CD4-positive, alpha-beta T cell (primary cell): ENCODE measurements at regions of chr14 and their contacts with region 1.

Region 1: DNA sequence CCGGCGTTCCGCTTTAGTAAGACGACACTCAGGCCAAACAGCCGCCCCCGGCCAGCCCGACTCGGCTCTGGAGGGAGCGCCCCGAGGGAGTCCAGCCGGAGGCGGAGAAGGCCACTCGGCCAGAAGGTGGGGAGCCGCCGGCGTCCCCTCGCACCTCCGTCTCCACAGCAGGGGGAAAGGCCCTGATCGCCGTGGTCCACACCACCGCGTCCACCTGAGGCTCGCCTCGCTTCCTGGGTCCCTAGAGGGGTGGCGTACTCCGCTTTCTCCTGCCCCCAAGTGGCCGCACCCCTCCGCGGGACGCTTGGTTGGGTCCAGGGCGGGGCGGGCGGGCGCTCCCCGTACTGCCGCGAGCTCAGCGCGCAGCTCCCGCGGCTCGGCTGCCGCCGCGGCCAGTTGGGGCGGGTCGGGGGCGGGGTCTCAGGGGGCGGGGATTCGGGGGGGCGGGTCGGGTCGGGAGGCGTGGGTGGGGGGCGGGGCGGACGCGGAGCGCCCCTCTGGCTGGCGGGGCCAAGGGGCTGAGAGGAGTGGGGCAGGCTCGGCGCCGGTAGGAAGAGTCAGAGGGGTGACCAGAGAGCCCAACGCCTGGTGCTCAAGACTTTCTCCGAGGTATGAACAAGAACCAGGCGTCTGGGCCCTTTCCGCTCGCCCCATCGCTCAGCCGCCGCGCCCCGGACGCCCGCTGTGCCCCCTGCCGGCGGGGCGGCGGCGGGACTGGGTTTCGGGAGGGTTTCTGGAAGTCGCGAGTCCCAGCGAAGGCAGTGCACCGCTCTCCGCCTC is at the start of gene FRMD6:
- DNase-seq: peak; percentile 61 to 91 (median 76)
- ATAC-seq: peak; percentile 80
- H3K4me3 ChIP-seq: peak within 1 kb of the TSS; percentile 72
- H3K4me3 Mint-ChIP-seq: peak within 1 kb of the TSS; percentile 86
- H3K27ac ChIP-seq: peak within 1 kb of the TSS in 1 of 2 donors; percentile 61
- H3K27ac Mint-ChIP-seq: peak within 1 kb of the TSS; percentile 84
- H3K4me1 ChIP-seq: peaks cover 15% of the 10 kb centered on the region
- H3K4me1 Mint-ChIP-seq: peaks cover 20% of the 10 kb centered on the region
- H3K27me3 ChIP-seq: peaks cover 5 to 18% of the 10 kb centered on the region in 2 experiments
- H3K27me3 Mint-ChIP-seq: peaks cover 17% of the 10 kb centered on the region
- CTCF ChIP-seq: peak; percentile 75
- total RNA-seq, gene FRMD6: 1.4 to 1.5 TPM

Region 2: GRCh38 chr14:50311975-50312733 is 1339.4 kb before region 1 on chr14 and contains the starts of genes DMAC2L and L2HGDH:
- CTCF ChIA-PET with region 1: no interaction called
- POLR2A ChIA-PET with region 1: no interaction called
- intact Hi-C with region 1: loop called in 1 of 2 experiments (anchors 5 kb)
- DNase-seq: peak; percentile 72 to 94 (median 84)
- ATAC-seq: peak; percentile 85
- H3K4me3 ChIP-seq: peak within 1 kb of the TSS; percentile 90
- H3K4me3 Mint-ChIP-seq: peak within 1 kb of the TSS; percentile 97
- H3K27ac ChIP-seq: peak within 1 kb of the TSS; percentile 85 to 90
- H3K27ac Mint-ChIP-seq: peak within 1 kb of the TSS; percentile 98
- H3K4me1 ChIP-seq: peaks cover 23% of the 10 kb centered on the region
- H3K4me1 Mint-ChIP-seq: peaks cover 57% of the 10 kb centered on the region
- H3K27me3 ChIP-seq: no peaks in the 10 kb centered on the region
- H3K27me3 Mint-ChIP-seq: no peaks in the 10 kb centered on the region
- CTCF ChIP-seq: no peak
- total RNA-seq, gene DMAC2L: 10.8 to 13.4 TPM
- total RNA-seq, gene L2HGDH: 1.7 to 3.1 TPM

Region 3: DNA sequence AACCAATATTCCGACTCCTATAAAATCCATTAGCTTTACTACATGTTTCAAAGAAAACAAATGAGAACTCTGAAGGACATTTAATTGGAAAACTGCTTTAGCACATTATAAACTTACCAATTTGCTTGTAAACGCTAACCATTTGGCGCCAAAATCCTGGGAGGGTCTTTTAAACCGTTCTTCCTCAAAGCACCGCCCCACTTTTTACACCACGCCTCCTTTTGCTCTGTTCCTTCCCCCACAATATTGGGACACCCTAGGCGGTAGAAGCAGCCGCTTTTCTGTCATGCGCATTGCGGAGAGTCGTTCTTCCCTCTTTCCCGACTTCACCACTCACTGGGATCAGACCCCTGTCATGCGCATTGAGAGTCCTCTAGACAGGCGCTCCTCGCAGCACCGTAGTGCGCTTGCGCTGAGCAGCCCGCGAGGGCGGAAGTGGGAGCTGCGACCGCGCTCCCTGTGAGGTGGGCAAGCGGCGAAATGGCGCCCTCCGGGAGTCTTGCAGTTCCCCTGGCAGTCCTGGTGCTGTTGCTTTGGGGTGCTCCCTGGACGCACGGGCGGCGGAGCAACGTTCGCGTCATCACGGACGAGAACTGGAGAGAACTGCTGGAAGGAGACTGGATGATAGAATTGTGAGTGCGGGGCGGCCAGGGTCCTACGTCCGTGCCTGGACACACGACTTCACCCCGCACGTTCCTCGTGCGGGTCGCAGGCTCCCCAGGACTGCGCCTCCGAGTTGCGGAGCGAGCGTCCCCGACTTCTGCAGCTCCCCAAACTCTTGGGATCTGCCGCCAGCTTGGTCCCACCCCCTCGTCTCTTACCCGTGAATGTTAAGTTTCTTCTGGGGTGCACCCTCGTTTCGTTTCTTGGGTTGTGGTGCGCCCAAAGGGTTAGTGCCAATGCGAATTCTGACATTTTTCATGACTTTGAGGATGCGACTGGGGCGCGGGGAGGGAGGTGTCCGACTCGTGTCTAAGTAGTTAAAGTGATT is 411.5 kb before region 1 on chr14 and contains the start of gene TMX1:
- CTCF ChIA-PET with region 1: no interaction called
- POLR2A ChIA-PET with region 1: no interaction called
- intact Hi-C with region 1: loop called in 1 of 2 experiments (anchors 5 kb)
- DNase-seq: peak; percentile 63 to 95 (median 80)
- ATAC-seq: peak; percentile 90
- H3K4me3 ChIP-seq: peak within 1 kb of the TSS; percentile 86
- H3K4me3 Mint-ChIP-seq: no peak within 1 kb of the TSS
- H3K27ac ChIP-seq: peak within 1 kb of the TSS; percentile 69 to 75
- H3K27ac Mint-ChIP-seq: no peak within 1 kb of the TSS
- H3K4me1 ChIP-seq: peaks cover 19% of the 10 kb centered on the region
- H3K4me1 Mint-ChIP-seq: peaks cover 42% of the 10 kb centered on the region
- H3K27me3 ChIP-seq: no peaks in the 10 kb centered on the region
- H3K27me3 Mint-ChIP-seq: no peaks in the 10 kb centered on the region
- CTCF ChIP-seq: no peak
- total RNA-seq, gene TMX1: 9.5 to 11.0 TPM

Region 4: GRCh38 chr14:51846631-51847488 is 195.3 kb after region 1 on chr14:
- CTCF ChIA-PET with region 1: interaction called, 5 read pairs
- POLR2A ChIA-PET with region 1: interaction called, 11 read pairs
- intact Hi-C with region 1: loop called (anchors 5 to 10 kb)
- DNase-seq: peak; percentile 66 to 98 (median 82)
- ATAC-seq: peak; percentile 83
- H3K4me3 ChIP-seq: peak overlapping the region; percentile 53
- H3K4me3 Mint-ChIP-seq: peak overlapping the region; percentile 86
- H3K27ac ChIP-seq: peak overlapping the region; percentile 99 to 100
- H3K27ac Mint-ChIP-seq: peak overlapping the region; percentile 98
- H3K4me1 ChIP-seq: peaks cover 44% of the 10 kb centered on the region
- H3K4me1 Mint-ChIP-seq: peaks cover 72% of the 10 kb centered on the region
- H3K27me3 ChIP-seq: no peaks in the 10 kb centered on the region
- H3K27me3 Mint-ChIP-seq: no peaks in the 10 kb centered on the region
- CTCF ChIP-seq: no peak

Region 5: GRCh38 chr14:51979088-51979709 is 327.6 kb after region 1 on chr14:
- CTCF ChIA-PET with region 1: interaction called, 3 read pairs
- POLR2A ChIA-PET with region 1: no interaction called
- intact Hi-C with region 1: loop called in 1 of 2 experiments (anchors 2 kb)
- DNase-seq: peak; percentile 66 to 90 (median 80)
- ATAC-seq: peak; percentile 91
- H3K4me3 ChIP-seq: no peak overlapping the region
- H3K4me3 Mint-ChIP-seq: no peak overlapping the region
- H3K27ac ChIP-seq: no peak overlapping the region
- H3K27ac Mint-ChIP-seq: no peak overlapping the region
- H3K4me1 ChIP-seq: peaks cover 8% of the 10 kb centered on the region
- H3K4me1 Mint-ChIP-seq: peaks cover 7% of the 10 kb centered on the region
- H3K27me3 ChIP-seq: no peaks in the 10 kb centered on the region
- H3K27me3 Mint-ChIP-seq: no peaks in the 10 kb centered on the region
- CTCF ChIP-seq: peak; percentile 98

Region 6: DNA sequence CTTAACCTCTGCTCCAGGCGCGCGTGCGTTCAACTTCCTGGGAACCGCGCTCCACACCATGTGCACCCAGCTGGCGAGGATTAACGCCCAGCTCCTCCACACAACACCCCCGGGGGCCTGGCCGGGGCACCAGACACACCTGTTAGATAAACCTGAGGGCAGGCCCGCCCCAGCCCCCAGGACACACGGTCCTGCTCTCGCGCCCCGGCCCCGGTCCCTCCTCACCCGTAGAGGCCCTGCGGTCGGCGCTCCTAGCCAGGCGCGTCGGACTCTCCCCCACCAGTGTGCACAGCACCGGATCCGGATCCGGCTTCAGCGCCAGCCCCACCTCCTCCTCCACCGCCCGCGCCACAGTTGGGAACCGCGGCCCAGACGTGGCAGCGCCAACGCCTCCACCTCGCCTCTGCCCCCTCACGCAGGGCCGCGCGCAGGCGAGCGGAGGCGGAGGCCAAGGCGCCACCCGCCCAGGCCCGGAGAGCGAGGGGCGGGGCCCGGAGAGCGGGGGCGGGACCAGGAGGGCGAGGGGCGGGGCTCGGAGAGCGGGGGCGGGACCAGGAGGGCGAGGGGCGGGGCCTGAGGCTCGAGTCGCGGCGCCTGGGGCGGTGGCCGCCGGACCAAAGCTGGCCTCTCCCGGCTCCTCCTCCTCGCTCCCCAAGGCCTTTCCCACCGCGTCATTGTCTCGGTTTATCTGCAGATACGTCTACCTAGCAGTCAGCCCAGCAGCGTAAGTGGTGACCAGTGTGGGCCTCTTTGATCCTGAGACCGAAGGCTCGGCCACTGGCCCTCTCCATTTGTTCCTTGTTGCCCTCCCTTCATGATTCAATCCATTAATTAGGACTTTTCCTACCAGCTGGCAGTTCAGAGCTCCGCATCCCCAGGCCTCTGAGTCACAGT is 1139.9 kb after region 1 on chr14 and contains the start of gene GNPNAT1:
- CTCF ChIA-PET with region 1: no interaction called
- POLR2A ChIA-PET with region 1: no interaction called
- intact Hi-C with region 1: loop called in 1 of 2 experiments (anchors 5 kb)
- DNase-seq: peak; percentile 79 to 97 (median 87)
- ATAC-seq: peak; percentile 97
- H3K4me3 ChIP-seq: peak within 1 kb of the TSS; percentile 95
- H3K4me3 Mint-ChIP-seq: peak within 1 kb of the TSS; percentile 94
- H3K27ac ChIP-seq: peak within 1 kb of the TSS; percentile 64 to 78
- H3K27ac Mint-ChIP-seq: peak within 1 kb of the TSS; percentile 92
- H3K4me1 ChIP-seq: peaks cover 21% of the 10 kb centered on the region
- H3K4me1 Mint-ChIP-seq: peaks cover 51% of the 10 kb centered on the region
- H3K27me3 ChIP-seq: no peaks in the 10 kb centered on the region
- H3K27me3 Mint-ChIP-seq: no peaks in the 10 kb centered on the region
- CTCF ChIP-seq: no peak
- total RNA-seq, gene GNPNAT1: 3.8 to 4.6 TPM